B cell (primary cell): ENCODE measurements at regions of chr1 and their contacts with region 1.

Region 1: GRCh38 chr1:172089768-172090510 is 248.6 kb downstream of the DNM3 start:
- DNase-seq: peak; percentile 75
- ATAC-seq: peak; percentile 80
- H3K4me3 ChIP-seq: peak overlapping the region in 1 of 5 experiments; percentile 7
- H3K4me3 Mint-ChIP-seq: no peak overlapping the region
- H3K27ac ChIP-seq: no peak overlapping the region
- H3K27ac Mint-ChIP-seq: no peak overlapping the region
- H3K4me1 ChIP-seq: no peaks in the 10 kb centered on the region
- H3K4me1 Mint-ChIP-seq: peaks cover 9% of the 10 kb centered on the region
- H3K27me3 ChIP-seq: no peaks in the 10 kb centered on the region
- H3K27me3 Mint-ChIP-seq: no peaks in the 10 kb centered on the region
- CTCF ChIP-seq: peak; percentile 84

Region 2: GRCh38 chr1:171929121-171929520 is 160.8 kb before region 1 on chr1:
- CTCF ChIA-PET with region 1: no interaction called
- POLR2A ChIA-PET with region 1: no interaction called
- intact Hi-C with region 1: no loop called
- DNase-seq: no peak
- ATAC-seq: no peak
- H3K4me3 ChIP-seq: no peak overlapping the region
- H3K4me3 Mint-ChIP-seq: no peak overlapping the region
- H3K27ac ChIP-seq: no peak overlapping the region
- H3K27ac Mint-ChIP-seq: no peak overlapping the region
- H3K4me1 ChIP-seq: no peaks in the 10 kb centered on the region
- H3K4me1 Mint-ChIP-seq: no peaks in the 10 kb centered on the region
- H3K27me3 ChIP-seq: no peaks in the 10 kb centered on the region
- H3K27me3 Mint-ChIP-seq: peaks cover 7% of the 10 kb centered on the region
- CTCF ChIP-seq: no peak

Region 3: DNA sequence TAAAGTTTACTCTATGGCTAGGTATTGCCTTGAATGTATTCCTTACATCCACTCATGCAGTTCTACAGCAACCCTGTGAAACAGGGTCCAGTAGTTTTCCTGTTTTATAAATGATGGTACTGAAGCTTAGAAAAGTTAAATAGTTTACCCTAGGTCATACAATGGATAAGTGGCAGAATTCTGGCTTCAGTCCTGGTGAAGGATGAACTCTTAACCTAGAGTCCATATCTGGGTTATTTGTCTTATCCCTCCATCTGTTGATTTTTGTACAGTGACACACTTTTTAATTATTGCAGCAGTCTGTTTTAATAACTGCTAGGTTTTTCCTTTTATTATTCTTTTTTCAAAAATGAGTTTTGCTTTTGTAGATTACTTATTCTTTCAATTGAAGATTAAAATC is 15.3 kb after region 1 on chr1:
- CTCF ChIA-PET with region 1: interaction called, 10 read pairs
- POLR2A ChIA-PET with region 1: no interaction called
- intact Hi-C with region 1: no loop called
- DNase-seq: no peak
- ATAC-seq: no peak
- H3K4me3 ChIP-seq: no peak overlapping the region
- H3K4me3 Mint-ChIP-seq: no peak overlapping the region
- H3K27ac ChIP-seq: no peak overlapping the region
- H3K27ac Mint-ChIP-seq: no peak overlapping the region
- H3K4me1 ChIP-seq: no peaks in the 10 kb centered on the region
- H3K4me1 Mint-ChIP-seq: no peaks in the 10 kb centered on the region
- H3K27me3 ChIP-seq: no peaks in the 10 kb centered on the region
- H3K27me3 Mint-ChIP-seq: peaks cover 4% of the 10 kb centered on the region
- CTCF ChIP-seq: no peak

Region 4: GRCh38 chr1:172135076-172135672 is 45.2 kb after region 1 on chr1:
- CTCF ChIA-PET with region 1: interaction called, 6 read pairs
- POLR2A ChIA-PET with region 1: no interaction called
- intact Hi-C with region 1: loop called (anchors 5 kb)
- DNase-seq: peak; percentile 57
- ATAC-seq: no peak
- H3K4me3 ChIP-seq: no peak overlapping the region
- H3K4me3 Mint-ChIP-seq: no peak overlapping the region
- H3K27ac ChIP-seq: no peak overlapping the region
- H3K27ac Mint-ChIP-seq: no peak overlapping the region
- H3K4me1 ChIP-seq: no peaks in the 10 kb centered on the region
- H3K4me1 Mint-ChIP-seq: peaks cover 12% of the 10 kb centered on the region
- H3K27me3 ChIP-seq: no peaks in the 10 kb centered on the region
- H3K27me3 Mint-ChIP-seq: no peaks in the 10 kb centered on the region
- CTCF ChIP-seq: peak; percentile 82